Thyroid gland (tissue), 4 donors: ENCODE measurements at regions of chr6 and their contacts with region 1.

Region 1: DNA sequence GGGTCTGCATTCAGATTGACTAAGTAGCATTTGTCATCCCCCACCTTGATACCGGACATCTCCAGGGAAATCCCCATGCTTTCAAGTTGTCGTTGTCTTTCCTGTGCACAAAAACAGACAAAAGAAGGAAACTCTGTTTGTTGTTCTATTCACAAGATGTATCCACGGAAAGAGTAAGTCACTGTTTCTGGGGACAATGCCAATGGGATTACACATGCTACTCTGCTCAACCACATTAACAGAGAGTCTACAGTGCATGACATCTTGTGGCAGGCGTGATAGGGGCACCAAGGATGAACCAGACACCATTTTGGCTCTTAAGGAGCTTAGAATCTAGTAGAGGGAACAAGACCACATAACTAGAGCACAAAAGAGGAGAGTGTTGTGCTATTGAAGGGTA is 124.4 kb upstream of the NUP153 start:
- DNase-seq: no peak
- H3K4me3 ChIP-seq: no peak overlapping the region
- H3K27ac ChIP-seq: no peak overlapping the region
- H3K4me1 ChIP-seq: peaks cover 3 to 9% of the 10 kb centered on the region in 2 donors
- H3K27me3 ChIP-seq: no peaks in the 10 kb centered on the region
- CTCF ChIP-seq: no peak
- POLR2A ChIP-seq: no peak

Region 2: DNA sequence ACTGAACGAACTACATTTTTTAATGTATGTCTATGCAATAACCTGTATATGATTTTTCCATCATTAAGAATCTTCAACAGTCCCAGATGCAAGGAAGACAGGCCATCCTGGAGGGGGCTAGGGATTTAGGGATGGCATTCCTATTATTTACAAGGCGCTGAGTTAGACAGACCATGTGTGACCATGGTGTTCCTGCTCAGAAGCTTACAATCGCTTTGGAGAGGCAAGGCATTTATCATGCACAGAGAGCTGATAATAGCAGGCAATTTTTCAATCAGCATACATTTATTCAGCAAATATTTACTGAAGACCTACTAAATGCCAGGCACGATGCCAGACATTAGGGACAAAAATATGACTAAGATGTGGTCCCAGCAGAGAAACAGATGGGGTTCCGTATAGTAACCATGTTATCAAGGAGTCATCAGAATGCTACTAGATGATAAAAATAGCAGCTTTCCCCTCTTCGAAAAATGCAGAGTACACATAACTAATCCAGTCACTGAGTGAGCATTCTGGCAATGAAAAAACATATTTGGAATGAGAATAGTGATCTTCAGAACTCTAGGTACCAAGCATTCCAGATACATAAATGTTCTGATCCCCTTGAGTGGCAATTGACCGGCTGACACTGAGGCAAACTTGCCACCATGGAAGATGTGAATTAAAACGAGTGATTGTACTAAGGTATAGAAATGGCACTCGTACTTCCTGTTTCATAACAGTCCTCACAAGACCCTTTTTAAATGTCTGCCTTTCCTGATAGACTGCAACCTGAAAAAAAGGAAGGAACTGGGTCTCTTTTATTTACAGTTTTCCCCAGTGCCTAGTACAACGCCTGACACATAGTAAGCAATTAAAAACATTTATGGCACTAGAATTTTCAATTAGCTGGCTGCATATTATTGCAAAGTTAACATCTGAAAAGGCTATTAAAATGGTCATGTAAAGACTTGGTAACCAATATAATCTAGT is 1205.6 kb before region 1 on chr6:
- intact Hi-C with region 1: no loop called
- DNase-seq: no peak
- H3K4me3 ChIP-seq: no peak overlapping the region
- H3K27ac ChIP-seq: no peak overlapping the region
- H3K4me1 ChIP-seq: peaks cover 8 to 25% of the 10 kb centered on the region in 2 donors
- H3K27me3 ChIP-seq: no peaks in the 10 kb centered on the region
- CTCF ChIP-seq: no peak
- POLR2A ChIP-seq: no peak

Region 3: DNA sequence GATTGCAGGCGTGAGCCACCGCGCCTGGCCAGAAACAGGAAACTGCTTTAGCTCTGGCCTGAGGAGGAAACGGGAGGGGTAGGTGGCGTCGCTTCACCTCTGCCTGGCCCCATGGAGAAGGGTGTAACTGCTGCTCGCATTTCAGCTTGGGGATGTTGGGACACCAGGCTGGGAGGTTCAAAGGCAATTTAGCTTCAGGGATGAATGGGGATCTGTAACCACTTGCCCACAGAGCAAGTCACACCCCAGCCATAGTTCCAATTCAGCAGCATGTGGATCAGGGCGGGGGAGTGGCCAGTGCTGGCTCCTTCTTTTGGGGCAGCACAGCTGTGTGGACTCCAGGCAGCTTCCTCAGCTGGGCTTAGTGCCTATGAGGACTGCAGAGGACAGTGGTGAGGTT is 89.6 kb before region 1 on chr6:
- intact Hi-C with region 1: no loop called
- DNase-seq: no peak
- H3K4me3 ChIP-seq: no peak overlapping the region
- H3K27ac ChIP-seq: no peak overlapping the region
- H3K4me1 ChIP-seq: no peaks in the 10 kb centered on the region
- H3K27me3 ChIP-seq: no peaks in the 10 kb centered on the region
- CTCF ChIP-seq: no peak
- POLR2A ChIP-seq: no peak

Region 4: DNA sequence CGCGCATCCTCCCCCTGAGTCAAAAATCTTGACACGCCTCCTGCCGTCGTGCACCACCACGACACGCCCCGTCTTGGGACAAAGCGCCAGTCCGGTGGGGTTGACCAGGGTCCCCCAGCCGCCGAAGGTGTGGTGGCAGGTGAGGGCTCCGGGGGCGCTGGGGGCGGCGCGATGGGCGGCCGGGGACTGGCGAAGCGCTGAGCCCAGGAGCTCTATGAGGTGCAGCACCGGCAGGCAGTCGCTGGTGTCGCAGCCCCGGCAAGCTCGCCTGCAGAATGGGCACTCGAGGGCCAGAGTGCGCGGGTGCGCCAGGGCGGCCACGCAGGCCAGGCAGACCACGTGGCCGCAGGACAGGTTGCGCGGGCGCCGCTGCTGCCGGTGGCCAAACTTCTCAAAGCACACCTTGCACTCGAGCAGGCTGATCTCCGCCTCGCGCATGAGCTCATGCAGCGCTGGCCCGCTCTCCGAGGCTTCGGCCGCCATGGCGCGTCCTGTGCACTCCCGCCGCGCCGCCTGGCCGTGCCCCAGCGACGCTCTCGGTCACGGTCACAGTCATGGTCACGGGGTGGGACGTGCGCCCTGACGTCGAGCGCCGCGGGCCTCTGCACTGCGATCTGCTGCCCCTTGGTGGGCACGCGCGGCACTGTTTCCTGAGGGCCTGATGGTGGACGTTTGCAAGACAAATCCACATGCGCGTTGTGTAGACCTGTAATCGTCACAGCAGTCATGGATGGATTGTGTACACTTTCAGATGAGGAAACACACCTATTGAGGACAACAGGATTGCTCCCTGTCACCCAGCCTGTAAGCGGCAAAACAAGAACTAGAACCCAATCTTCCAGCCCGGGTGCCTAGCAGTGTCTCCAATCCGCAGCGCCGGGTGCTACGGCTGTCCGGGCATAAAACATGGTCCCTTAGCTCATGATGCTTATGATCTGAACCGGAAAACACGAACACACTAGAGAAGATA is 291.3 kb after region 1 on chr6 and contains the start of gene NHLRC1:
- intact Hi-C with region 1: loop called (anchors 10 kb)
- DNase-seq: peak; percentile 94
- H3K4me3 ChIP-seq: peak within 1 kb of the TSS in 2 of 3 donors; percentile 10 to 40
- H3K27ac ChIP-seq: peak within 1 kb of the TSS; percentile 4 to 77 (median 73)
- H3K4me1 ChIP-seq: peaks cover 11 to 14% of the 10 kb centered on the region in 2 donors
- H3K27me3 ChIP-seq: no peaks in the 10 kb centered on the region
- CTCF ChIP-seq: peak; percentile 64 to 99 (median 92)
- POLR2A ChIP-seq: peak in 1 of 2 donors; percentile 73
- total RNA-seq, gene NHLRC1: 1.7 to 4.9 (median 3.5) TPM